ENCODE measurements at regions of chr10 and their contacts with region 1.

Region 1: DNA sequence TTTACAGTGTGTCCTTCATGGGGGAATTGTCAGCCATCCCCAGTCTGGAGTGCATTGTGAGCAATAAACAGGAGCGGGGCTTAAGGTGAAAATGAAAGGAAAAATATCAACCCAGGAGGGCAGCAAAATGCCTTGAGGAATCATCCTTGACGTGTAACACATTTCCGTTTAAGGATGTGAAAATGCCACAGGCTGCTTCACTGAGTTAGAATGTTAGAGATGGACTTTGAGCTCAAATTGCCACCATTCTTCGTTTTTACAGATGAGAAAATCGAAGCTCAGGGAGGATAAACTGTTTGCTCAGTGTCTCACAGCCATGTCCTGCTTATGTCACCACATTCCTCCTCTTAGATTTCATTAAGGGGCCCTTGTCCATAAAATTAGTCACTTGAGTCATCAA is 23.1 kb downstream of the SORCS3 start:
- DNase-seq: no peak
- H3K4me3 ChIP-seq: no peak overlapping the region
- H3K27ac ChIP-seq: no peak overlapping the region
- H3K4me1 ChIP-seq: no peaks in the 10 kb centered on the region
- H3K27me3 ChIP-seq: peaks cover 4% of the 10 kb centered on the region
- CTCF ChIP-seq: no peak

Region 2: DNA sequence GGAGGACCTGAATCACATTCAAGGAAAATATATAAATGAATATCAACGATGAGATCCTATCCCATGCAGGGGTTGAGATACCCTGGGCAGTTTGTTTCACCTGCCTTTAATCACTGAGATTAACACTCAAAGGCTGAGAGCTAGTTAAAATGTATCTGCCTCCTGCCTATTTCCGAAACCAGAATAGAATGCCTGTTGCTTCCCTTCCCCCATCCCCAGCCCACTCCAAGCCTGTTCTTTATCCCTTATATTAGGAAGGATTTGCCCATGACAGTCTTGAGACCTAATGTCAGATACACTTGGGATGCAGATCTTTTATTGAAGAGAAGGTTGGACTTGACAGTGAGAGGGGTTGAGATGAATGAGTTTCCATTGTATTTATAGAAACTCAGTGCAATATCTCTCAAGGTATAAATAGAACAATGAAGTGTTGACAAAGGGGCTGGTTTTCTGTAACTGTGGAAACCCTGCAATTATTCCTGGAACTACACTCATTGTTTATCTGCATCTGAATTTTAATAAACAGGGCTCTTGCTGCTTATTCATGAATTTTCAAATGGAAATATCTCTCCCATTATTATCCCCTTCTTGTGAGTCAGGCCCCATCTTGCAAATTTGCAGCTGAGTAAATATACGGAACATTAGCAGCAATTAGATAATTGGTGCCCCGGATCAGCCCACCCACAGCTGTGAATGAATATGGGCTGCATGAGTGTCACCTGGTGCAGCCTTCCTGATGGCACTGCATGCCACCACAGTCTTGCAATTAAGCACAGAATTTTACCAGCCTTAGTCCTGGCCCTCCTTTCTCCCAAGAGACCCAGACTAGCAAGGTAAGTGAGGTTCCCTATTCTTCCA is 43.6 kb after region 1 on chr10:
- CTCF ChIA-PET with region 1: no interaction called
- dilution Hi-C with region 1: loop called (anchors 5 kb)
- in situ Hi-C with region 1: no loop called
- intact Hi-C with region 1: no loop called
- DNase-seq: no peak
- H3K4me3 ChIP-seq: no peak overlapping the region
- H3K27ac ChIP-seq: no peak overlapping the region
- H3K4me1 ChIP-seq: no peaks in the 10 kb centered on the region
- H3K27me3 ChIP-seq: peaks cover 3% of the 10 kb centered on the region
- CTCF ChIP-seq: no peak

Region 3: DNA sequence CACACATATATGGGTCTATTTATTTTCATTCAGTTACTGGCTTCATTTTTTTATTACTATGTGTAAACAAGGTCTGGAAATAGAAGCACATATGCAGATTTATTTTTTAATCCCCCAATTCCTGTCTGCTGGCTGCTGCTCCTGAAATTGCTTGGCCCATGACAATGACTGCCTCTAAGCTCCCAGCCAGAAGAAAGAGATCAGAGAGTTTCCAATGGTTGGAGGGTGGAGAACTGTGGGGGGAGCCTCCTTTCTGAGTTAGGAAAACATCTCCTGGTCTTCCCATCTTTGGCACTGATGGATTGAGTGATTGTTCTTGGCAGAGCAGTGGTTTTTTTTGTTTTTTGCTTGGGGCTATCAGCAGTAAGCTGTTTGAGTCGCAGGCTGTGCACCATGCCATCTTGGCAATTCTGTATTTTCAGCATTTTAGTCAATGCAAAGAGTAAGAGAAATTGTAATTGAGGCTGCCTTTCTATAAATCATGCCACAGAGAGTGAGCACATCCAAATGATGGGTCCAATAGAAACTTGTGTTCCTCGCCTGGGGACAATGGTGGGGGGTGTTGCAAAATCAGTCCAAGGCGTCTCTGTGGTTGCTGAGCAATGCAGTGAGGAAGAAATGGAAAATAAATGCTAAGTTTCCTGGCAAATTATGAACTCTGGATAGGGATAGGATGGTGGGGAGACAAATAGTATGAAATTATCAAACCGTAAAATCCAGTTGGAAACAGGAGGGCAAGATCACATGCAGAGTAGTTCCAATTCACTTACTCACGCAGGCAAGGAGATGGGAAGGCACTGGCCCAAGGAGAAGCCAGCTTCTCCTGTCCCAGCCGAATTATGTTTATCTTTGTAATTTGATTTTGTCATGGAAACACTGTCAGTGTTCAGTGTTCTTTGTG is 359.3 kb after region 1 on chr10:
- CTCF ChIA-PET with region 1: no interaction called
- dilution Hi-C with region 1: no loop called
- in situ Hi-C with region 1: no loop called
- intact Hi-C with region 1: no loop called
- DNase-seq: no peak
- H3K4me3 ChIP-seq: no peak overlapping the region
- H3K27ac ChIP-seq: no peak overlapping the region
- H3K4me1 ChIP-seq: no peaks in the 10 kb centered on the region
- H3K27me3 ChIP-seq: no peaks in the 10 kb centered on the region
- CTCF ChIP-seq: no peak